Transverse colon (tissue), 4 donors: ENCODE measurements at regions of chr4 and their contacts with region 1.

Region 1: DNA sequence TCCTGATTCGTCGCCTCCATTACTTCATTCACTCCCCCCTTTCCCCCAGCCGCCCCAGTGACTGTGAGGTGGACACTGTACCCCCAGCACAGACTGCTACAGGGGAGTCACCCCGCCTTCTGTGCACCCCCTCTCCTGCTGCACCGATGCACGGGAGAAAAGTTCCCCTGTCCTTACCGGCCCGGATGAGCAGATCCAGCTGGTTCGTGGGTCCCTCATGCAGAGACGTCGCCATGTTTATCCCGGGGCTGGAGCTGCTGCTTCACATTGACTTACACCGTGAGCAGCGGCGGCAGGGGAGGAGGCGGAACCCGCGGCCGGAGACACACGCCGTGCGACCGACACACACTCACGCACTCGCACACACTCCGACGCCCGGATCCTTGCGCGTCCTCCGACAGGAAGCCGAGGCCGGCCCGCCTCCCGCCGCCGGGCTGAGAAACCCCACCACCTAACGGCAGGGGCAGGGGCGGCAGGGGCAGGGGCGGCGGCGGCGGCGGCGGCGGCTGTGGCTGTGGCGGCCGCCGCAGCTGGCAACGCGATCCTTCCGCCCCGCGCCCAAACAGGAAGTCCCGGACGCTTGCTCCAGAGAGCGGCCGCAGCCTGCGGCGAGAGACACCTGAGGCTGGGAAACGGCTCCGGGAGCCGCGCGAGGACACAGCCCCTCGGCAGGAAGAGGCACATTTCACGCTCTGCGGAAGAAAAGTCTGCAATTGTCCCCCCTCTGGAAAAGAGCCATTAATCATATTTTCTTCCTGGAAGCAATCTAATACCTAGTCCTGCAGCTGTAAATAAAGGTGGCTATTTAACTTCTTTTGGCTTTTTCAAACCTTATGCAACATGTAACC is 68.6 kb downstream of the NOCT start:
- DNase-seq: peak; percentile 90
- H3K4me3 ChIP-seq: peak overlapping the region; percentile 64 to 86 (median 76)
- H3K27ac ChIP-seq: peak overlapping the region; percentile 94 to 100 (median 98)
- H3K4me1 ChIP-seq: peaks cover 0 to 37% (median 19%) of the 10 kb centered on the region in 4 donors
- H3K27me3 ChIP-seq: no peaks in the 10 kb centered on the region
- CTCF ChIP-seq: peak in 3 of 5 experiments; percentile 15 to 22 (median 20)
- EP300 ChIP-seq: no peak
- POLR2A ChIP-seq: peak; percentile 84

Region 2: GRCh38 chr4:138392751-138393308 is 691.4 kb before region 1 on chr4:
- in situ Hi-C with region 1: no loop called
- intact Hi-C with region 1: no loop called
- DNase-seq: no peak
- H3K4me3 ChIP-seq: no peak overlapping the region
- H3K27ac ChIP-seq: no peak overlapping the region
- H3K4me1 ChIP-seq: no peaks in the 10 kb centered on the region
- H3K27me3 ChIP-seq: no peaks in the 10 kb centered on the region
- CTCF ChIP-seq: no peak
- EP300 ChIP-seq: no peak
- POLR2A ChIP-seq: no peak

Region 3: DNA sequence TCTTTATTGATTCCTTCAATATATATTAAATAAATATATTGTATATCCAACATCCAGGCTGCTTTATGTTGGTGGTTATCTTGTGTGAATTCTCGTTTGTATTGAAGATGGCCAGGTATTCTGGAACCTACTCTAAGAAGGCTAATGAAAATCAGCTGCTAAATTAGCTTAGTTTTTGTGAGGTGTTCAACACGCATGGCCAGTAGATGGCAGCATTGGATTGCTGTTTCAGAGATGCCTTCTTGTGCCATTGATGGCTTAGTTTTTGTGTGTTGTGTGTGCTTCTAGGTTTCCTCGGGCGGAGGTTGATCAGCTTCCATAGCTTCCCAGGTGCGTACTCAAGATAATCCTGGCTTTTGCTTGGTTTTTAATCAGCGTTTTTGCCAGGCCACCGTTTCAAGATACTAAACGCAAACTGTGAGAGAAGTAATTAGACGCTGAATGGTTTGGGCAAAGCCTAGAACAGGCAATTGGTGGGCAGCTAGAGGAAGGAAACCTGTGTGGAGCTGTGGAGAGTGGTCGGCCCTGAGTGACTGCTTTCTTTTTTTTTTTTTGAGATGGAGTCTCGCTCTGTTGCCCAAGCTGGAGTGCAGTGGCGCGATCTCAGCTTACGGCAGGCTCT is 53.5 kb before region 1 on chr4:
- in situ Hi-C with region 1: no loop called
- intact Hi-C with region 1: loop called (anchors 10 kb)
- DNase-seq: peak; percentile 76
- H3K4me3 ChIP-seq: no peak overlapping the region
- H3K27ac ChIP-seq: no peak overlapping the region
- H3K4me1 ChIP-seq: peaks cover 0 to 8% (median 0%) of the 10 kb centered on the region in 4 donors
- H3K27me3 ChIP-seq: no peaks in the 10 kb centered on the region
- CTCF ChIP-seq: peak; percentile 77 to 82 (median 79)
- EP300 ChIP-seq: no peak
- POLR2A ChIP-seq: no peak

Region 4: GRCh38 chr4:139177868-139178611 is 93.9 kb after region 1 on chr4:
- in situ Hi-C with region 1: no loop called
- intact Hi-C with region 1: loop called (anchors 5 kb)
- DNase-seq: peak; percentile 96
- H3K4me3 ChIP-seq: peak overlapping the region; percentile 89 to 100 (median 96)
- H3K27ac ChIP-seq: peak overlapping the region; percentile 99 to 100 (median 100)
- H3K4me1 ChIP-seq: peaks cover 9 to 24% (median 12%) of the 10 kb centered on the region in 4 donors
- H3K27me3 ChIP-seq: no peaks in the 10 kb centered on the region
- CTCF ChIP-seq: no peak
- EP300 ChIP-seq: peak; percentile 29
- POLR2A ChIP-seq: peak; percentile 91